ENCODE measurements at regions of chr17 and their contacts with region 1.

Region 1: GRCh38 chr17:45394913-45395568 is 37.6 kb downstream of the ARHGAP27 start:
- DNase-seq: peak; percentile 74
- ATAC-seq: peak; percentile 57
- H3K4me3 ChIP-seq: no peak overlapping the region
- H3K4me3 Mint-ChIP-seq: no peak overlapping the region
- H3K27ac ChIP-seq: no peak overlapping the region
- H3K27ac Mint-ChIP-seq: peak overlapping the region; percentile 59
- H3K4me1 ChIP-seq: no peaks in the 10 kb centered on the region
- H3K4me1 Mint-ChIP-seq: peaks cover 2% of the 10 kb centered on the region
- H3K27me3 ChIP-seq: no peaks in the 10 kb centered on the region
- H3K27me3 Mint-ChIP-seq: no peaks in the 10 kb centered on the region
- CTCF ChIP-seq: peak; percentile 74

Region 2: GRCh38 chr17:45410144-45411091 is 15.4 kb after region 1 on chr17:
- CTCF ChIA-PET with region 1: interaction called, 70 read pairs
- POLR2A ChIA-PET with region 1: interaction called, 3 read pairs
- intact Hi-C with region 1: no loop called
- DNase-seq: peak; percentile 80
- ATAC-seq: peak; percentile 63
- H3K4me3 ChIP-seq: peak overlapping the region; percentile 78 to 97 (median 86)
- H3K4me3 Mint-ChIP-seq: peak overlapping the region; percentile 100
- H3K27ac ChIP-seq: peak overlapping the region; percentile 74 to 89
- H3K27ac Mint-ChIP-seq: peak overlapping the region; percentile 99
- H3K4me1 ChIP-seq: peaks cover 82 to 93% of the 10 kb centered on the region in 2 donors
- H3K4me1 Mint-ChIP-seq: peaks cover 83% of the 10 kb centered on the region
- H3K27me3 ChIP-seq: no peaks in the 10 kb centered on the region
- H3K27me3 Mint-ChIP-seq: no peaks in the 10 kb centered on the region
- CTCF ChIP-seq: no peak

Region 3: DNA sequence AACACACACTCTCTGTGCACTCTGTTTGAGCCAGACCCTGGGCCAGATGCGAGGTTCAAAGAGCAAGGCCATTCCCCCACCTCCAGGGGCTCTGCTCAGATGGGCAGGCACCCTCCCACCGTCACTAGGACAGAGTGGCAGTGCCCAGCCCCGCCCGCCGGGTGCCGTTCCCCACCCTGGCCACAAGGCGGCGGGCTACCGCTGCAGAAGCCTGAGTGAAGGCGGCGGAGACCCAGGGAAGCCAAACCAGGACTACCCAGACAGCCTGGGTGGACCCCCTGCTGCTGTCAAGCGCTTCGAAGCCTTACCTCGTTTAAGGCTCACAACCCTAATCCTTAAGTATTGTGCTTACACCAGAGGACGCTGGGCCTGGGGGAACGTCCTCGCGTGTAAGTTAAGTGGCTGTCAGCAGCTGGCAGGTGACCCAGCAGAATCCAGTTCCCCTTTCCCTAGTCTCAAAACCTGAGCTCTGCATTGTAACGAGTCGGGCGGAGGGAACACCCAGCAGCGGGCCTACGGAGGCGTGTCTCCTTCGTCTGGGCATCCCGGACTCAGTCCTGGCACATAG is 33.1 kb after region 1 on chr17:
- CTCF ChIA-PET with region 1: interaction called, 10 read pairs
- POLR2A ChIA-PET with region 1: no interaction called
- intact Hi-C with region 1: loop called (anchors 1 kb)
- DNase-seq: peak; percentile 91
- ATAC-seq: peak; percentile 72
- H3K4me3 ChIP-seq: peak overlapping the region; percentile 21 to 79 (median 42)
- H3K4me3 Mint-ChIP-seq: peak overlapping the region; percentile 92
- H3K27ac ChIP-seq: peak overlapping the region; percentile 67 to 74
- H3K27ac Mint-ChIP-seq: peak overlapping the region; percentile 89
- H3K4me1 ChIP-seq: peaks cover 33 to 53% of the 10 kb centered on the region in 2 donors
- H3K4me1 Mint-ChIP-seq: peaks cover 34% of the 10 kb centered on the region
- H3K27me3 ChIP-seq: no peaks in the 10 kb centered on the region
- H3K27me3 Mint-ChIP-seq: no peaks in the 10 kb centered on the region
- CTCF ChIP-seq: peak; percentile 97

Region 4: DNA sequence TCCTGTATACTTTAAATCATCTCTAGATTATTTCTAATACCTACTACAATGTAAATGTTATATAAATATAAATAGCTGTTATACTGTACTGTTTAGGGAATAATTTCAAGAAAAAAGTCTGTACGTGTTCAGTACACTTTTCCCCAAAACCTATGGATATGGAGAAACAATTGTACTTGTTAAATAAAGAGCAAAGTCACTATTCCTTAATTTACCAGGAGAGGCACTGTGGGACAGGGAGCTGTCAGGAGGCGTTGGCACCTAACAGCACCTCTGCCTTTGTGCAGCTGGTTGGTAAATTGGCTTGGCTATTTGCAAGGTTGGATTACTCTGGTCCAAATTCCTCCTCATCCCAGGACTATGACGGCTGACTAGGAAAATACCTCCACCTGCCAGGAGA is 417.1 kb after region 1 on chr17:
- CTCF ChIA-PET with region 1: no interaction called
- POLR2A ChIA-PET with region 1: no interaction called
- intact Hi-C with region 1: no loop called
- DNase-seq: no peak
- ATAC-seq: no peak
- H3K4me3 ChIP-seq: no peak overlapping the region
- H3K4me3 Mint-ChIP-seq: no peak overlapping the region
- H3K27ac ChIP-seq: no peak overlapping the region
- H3K27ac Mint-ChIP-seq: no peak overlapping the region
- H3K4me1 ChIP-seq: no peaks in the 10 kb centered on the region
- H3K4me1 Mint-ChIP-seq: no peaks in the 10 kb centered on the region
- H3K27me3 ChIP-seq: peaks cover 0 to 10% (median 2%) of the 10 kb centered on the region in 4 experiments
- H3K27me3 Mint-ChIP-seq: peaks cover 22% of the 10 kb centered on the region
- CTCF ChIP-seq: no peak